Right ventricle myocardium inferior (tissue), 1 donor: ENCODE measurements at regions of chr9 and their contacts with region 1.

Region 1: DNA sequence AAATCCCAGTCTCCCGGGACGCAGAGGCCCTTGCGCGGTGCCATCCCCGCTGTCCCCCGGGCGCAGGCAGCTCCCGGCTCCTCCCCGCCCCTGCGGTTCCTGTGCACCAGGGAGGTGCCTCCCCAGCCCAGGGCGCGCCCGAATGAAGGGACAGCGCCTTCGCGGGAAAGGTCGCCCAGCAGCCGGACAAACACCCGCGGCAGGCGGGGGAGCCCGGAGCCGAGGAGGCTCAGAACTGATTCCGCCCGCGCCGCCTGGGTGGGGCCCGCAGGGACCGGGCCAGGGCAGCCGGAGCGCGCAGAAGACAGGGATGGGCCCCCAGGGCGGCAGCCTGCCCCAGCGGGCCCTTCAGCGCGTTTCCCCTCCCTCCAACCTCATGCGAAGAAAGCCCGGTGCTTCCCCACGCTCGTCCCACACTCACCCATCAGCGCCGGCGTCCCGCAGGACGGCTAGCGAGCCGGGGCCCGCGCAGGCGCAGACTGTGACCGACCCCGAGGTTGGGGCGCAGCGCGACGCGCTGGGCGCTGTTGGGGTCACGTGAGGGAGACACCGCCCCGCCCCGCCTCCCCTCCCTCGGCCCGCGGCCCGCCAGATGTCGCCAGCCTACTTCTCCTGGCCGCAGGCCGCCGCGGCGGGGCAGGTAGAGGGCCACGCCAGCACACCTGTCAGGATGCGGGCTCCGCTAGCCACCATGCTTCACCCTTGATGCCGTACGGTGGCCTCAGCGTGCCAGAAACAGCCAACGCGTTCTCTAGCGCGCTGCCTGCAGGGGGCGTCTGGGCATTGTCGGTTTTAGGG is at the start of gene SLC25A51:
- DNase-seq: peak; percentile 96
- ATAC-seq: peak; percentile 94
- total RNA-seq, gene SLC25A51: 22.0 TPM

Region 2: GRCh38 chr9:38017149-38017884 is 113.5 kb after region 1 on chr9:
- intact Hi-C with region 1: no loop called
- DNase-seq: no peak
- ATAC-seq: peak; percentile 72

Region 3: DNA sequence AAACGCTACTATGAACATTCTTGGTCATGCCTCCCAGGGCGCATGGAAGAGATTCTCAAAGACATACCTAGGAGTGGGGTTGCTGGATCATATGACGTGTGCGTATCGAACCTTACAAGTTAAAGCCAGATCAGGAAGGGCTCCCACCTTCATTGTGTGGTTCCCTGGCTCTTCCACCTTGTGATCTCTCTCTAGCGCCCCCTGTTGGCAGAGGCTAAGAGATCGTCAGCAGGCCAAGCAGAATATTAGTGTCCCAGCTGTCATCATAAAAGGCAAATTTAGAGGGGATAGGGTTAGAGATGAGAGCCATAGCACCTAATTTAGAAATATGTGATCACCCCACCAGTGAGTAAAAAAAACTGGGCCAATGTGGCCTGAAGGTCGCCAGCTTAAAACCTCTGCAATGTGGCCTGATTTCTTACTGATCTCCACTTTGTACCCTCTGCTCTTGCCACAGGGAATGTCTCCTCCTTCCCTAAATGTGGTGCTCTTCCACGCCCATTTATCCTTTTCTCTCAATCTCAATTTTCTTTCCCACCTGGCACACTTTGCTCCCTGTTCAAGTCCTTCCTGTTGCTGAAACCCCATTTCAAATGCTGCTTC is 256.9 kb after region 1 on chr9:
- intact Hi-C with region 1: loop called (anchors 2 kb)
- DNase-seq: no peak
- ATAC-seq: peak; percentile 53

Region 4: DNA sequence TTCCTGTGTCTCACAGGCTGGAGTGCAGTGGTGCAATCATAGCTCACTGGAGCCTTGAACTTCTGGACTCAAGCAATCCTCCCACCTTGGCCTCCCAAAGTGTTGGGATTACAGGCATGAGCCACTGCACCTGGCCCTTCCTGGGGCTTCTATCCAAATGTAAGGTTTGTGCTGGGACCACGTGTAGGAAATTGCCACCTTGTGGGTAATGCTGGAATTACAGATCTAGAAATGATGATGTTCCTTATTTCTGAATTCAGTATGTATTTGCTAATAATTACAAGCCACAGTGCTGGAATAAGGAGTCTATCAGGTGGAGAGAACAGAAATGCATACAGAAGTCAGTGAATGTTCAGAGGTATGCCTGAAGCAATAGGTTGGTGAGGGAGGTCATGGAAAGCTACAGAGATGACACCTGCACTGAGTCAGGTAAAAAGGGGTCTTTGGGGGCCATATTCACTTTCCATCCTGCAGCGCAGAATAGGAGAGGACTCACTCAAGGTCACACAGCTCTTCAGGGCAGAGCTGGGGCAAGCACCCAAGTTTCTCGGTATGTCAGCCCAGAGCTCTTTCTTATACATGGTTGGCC is 529.2 kb after region 1 on chr9:
- intact Hi-C with region 1: loop called (anchors 5 kb)
- DNase-seq: no peak
- ATAC-seq: no peak